PC-9 (cell line): ENCODE measurements at regions of chr4 and their contacts with region 1.

Region 1: GRCh38 chr4:145732895-145733880 is 53.2 kb downstream of the C4orf51 start:
- DNase-seq: peak; percentile 75 to 96
- H3K4me3 ChIP-seq: peak overlapping the region; percentile 65
- H3K27ac ChIP-seq: peak overlapping the region; percentile 100
- H3K4me1 ChIP-seq: peaks cover 41% of the 10 kb centered on the region
- H3K27me3 ChIP-seq: no peaks in the 10 kb centered on the region
- CTCF ChIP-seq: no peak

Region 2: DNA sequence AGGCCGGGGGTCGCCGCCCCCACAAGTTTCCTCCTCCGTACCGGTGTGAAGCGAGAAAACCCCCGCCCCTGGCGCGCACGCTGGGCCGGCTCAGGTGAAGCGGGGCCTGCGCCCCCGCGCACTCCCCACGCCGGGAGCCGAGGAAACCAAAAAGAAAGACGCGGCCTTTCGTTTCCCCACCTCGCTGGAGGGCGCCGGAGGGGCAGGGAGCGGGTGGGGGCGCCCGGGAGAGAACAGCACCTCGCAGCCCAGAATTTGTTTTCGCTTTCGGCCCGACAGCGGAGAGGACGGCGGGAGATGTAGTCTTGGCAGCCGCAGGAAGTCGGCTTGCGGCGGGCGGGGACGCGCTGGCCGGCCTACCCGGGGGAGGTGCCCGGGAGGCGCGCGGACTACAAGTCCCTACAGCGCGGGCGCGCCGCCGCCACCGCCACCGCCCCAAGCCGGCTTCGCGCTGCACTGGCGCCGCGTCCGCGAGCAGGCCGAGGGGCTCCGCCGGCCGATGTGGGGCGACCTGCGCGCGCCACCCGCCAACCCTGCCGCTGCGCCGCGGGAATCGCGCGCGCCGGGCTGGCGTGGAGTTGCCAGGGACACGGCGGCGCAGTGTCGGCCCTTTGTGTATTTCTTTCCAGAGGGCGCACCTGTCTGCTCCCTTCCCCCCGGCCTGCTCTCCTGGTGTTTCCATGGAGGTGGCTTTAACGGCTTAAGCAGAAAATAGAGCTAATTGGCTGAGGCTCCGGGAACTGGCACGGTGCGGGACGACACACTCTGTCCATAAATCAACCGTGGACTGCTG is 552.7 kb before region 1 on chr4 and contains the start of gene OTUD4:
- CTCF ChIA-PET with region 1: no interaction called
- POLR2A ChIA-PET with region 1: no interaction called
- intact Hi-C with region 1: loop called (anchors 2 kb)
- DNase-seq: peak; percentile 71 to 94
- H3K4me3 ChIP-seq: peak within 1 kb of the TSS; percentile 95
- H3K27ac ChIP-seq: peak within 1 kb of the TSS; percentile 79
- H3K4me1 ChIP-seq: peaks cover 14% of the 10 kb centered on the region
- H3K27me3 ChIP-seq: no peaks in the 10 kb centered on the region
- CTCF ChIP-seq: no peak
- total RNA-seq, gene OTUD4: 43.5 and 44.2 TPM in 2 replicates

Region 3: DNA sequence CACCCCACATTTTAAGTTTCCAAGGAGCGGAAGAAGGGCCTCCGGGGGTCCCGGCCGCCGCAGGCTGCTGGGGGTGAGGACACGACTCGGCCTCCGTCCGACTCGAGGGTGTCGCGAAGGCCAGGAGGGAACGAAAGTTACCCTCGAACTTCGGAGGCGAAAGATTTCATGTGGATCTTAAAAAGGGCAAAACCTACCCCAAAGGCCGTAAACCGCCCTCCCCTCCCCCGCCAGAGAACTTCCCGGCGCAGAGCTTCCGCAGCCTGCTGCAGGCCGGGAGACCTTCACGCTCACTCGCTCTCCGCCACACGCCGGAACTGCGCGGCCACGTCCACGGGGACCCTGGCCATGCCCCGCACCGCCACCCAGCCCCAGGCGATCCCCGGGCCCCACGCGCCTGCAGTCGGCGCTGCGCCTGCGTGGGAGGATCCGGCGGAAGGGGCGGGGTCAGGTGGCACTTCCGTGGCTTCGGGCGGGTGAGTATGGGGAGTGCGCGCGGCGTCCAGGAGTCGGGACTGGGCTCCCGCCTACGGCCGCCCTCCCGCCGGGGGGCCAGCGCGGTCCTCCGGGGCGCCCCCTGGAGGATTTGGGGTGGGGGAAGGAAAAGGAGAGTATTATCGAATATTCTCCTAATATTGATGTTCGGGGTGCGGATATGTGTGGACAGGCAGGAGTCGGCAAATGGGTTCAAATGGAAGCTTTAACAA is 114.1 kb before region 1 on chr4 and contains the start of gene MMAA:
- CTCF ChIA-PET with region 1: no interaction called
- POLR2A ChIA-PET with region 1: interaction called, 4 read pairs
- intact Hi-C with region 1: loop called (anchors 1 kb)
- DNase-seq: peak; percentile 66 to 94
- H3K4me3 ChIP-seq: peak within 1 kb of the TSS; percentile 94
- H3K27ac ChIP-seq: peak within 1 kb of the TSS; percentile 86
- H3K4me1 ChIP-seq: no peaks in the 10 kb centered on the region; the same call in 1 of the 2 replicates
- H3K27me3 ChIP-seq: no peaks in the 10 kb centered on the region
- CTCF ChIP-seq: peak; percentile 72
- total RNA-seq, gene MMAA: 5.4 and 6.3 TPM in 2 replicates

Region 4: GRCh38 chr4:145719752-145720624 is 13.2 kb before region 1 on chr4:
- CTCF ChIA-PET with region 1: no interaction called
- POLR2A ChIA-PET with region 1: interaction called, 10 read pairs
- intact Hi-C with region 1: no loop called
- DNase-seq: no peak
- H3K4me3 ChIP-seq: no peak overlapping the region
- H3K27ac ChIP-seq: no peak overlapping the region
- H3K4me1 ChIP-seq: peaks cover 12% of the 10 kb centered on the region
- H3K27me3 ChIP-seq: no peaks in the 10 kb centered on the region
- CTCF ChIP-seq: no peak

Region 5: GRCh38 chr4:145808021-145808650 is 74.9 kb after region 1 on chr4:
- CTCF ChIA-PET with region 1: interaction called, 5 read pairs
- POLR2A ChIA-PET with region 1: interaction called, 4 read pairs
- intact Hi-C with region 1: loop called (anchors 1 kb)
- DNase-seq: peak; percentile 77 to 96
- H3K4me3 ChIP-seq: peak overlapping the region; percentile 35; the same call in 1 of the 2 replicates
- H3K27ac ChIP-seq: peak overlapping the region; percentile 99
- H3K4me1 ChIP-seq: peaks cover 26% of the 10 kb centered on the region
- H3K27me3 ChIP-seq: no peaks in the 10 kb centered on the region
- CTCF ChIP-seq: no peak

Region 6: DNA sequence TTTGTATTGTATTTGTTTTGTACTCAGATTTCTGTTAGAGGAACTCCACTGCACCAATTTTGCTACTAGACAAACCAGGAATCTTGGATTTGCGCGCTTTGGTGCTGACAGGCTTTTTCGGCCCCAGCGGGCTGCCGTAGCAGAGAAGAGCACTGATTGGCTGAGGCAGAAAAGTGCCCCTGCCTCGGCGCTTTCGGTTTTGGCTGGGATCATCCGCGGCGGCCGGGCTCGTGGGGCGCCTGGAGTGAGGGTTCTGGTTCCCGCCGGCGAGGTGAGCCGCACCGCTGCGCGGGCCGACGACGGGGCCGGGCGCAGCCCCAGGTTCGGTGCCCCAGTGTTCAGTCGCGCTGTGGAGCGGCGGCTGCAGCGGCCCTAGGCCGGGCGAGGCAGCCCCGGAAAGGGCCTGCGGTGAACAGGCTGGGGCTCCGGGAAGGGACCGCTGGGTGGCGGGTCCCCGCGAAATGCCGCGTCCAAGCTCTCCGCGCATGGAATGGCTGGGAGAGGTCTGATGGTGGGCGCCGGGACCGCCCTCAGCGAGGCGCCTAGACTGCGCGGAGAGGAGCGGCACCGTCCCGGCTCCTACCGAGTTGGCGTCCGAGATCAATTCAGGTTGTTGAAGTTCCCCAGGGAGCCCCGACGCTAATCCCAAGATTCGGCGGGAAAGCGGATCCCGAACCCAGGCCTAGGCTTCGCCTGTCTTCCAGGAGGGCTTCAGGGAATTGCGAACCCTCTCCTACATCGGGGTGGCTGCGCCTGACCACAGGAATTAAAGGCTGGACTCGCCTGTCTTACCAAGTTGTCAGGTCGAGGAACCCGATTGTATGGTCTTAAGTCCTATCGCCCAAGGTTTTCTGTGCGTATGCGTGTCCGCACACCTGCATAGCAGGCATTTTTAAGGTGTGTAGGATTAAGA is 442.6 kb after region 1 on chr4 and contains the start of gene LSM6:
- CTCF ChIA-PET with region 1: no interaction called
- POLR2A ChIA-PET with region 1: interaction called, 3 read pairs
- intact Hi-C with region 1: loop called (anchors 5 kb)
- DNase-seq: peak; percentile 53 to 73
- H3K4me3 ChIP-seq: peak within 1 kb of the TSS; percentile 91
- H3K27ac ChIP-seq: peak within 1 kb of the TSS; percentile 57
- H3K4me1 ChIP-seq: peaks cover 12% of the 10 kb centered on the region
- H3K27me3 ChIP-seq: no peaks in the 10 kb centered on the region
- CTCF ChIP-seq: no peak
- total RNA-seq, gene LSM6: 43.3 and 45.6 TPM in 2 replicates

Region 7: DNA sequence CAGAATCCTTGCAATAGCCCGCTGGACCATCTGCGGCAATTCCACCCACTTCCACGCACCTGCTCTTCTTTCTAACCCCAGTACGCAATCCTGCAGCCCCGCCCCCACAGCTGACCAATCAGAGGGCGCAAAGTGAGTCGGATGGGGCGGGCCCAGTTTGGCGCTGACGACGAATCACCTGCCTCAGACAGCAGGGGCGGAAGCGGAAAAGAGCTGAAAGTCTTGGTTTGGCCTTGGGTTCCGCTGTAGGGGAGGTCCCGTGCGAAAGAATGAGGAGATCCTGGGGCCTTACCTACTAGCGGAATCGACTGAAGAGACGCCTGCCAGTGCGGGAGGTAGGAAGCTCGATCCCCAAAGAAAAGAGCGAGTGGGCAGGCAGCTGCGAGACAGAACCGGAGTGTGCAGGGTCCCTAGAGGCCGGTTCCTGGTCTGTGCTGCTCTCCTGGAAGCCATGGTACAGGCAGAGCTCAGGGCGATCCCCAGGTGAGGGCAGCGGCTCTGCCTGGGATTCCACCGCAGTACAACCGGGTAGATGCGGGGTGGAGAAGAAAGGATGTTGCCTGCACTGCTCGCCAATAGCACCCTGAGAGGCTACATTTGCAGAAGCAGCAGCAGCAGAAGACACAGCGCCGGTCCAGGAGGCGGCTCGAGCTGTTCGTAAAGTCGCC is 1884.1 kb after region 1 on chr4 and contains the start of gene TMEM184C:
- CTCF ChIA-PET with region 1: no interaction called
- POLR2A ChIA-PET with region 1: no interaction called
- intact Hi-C with region 1: loop called (anchors 5 kb)
- DNase-seq: peak; percentile 86 to 97
- H3K4me3 ChIP-seq: peak within 1 kb of the TSS; percentile 84
- H3K27ac ChIP-seq: peak within 1 kb of the TSS; percentile 44
- H3K4me1 ChIP-seq: no peaks in the 10 kb centered on the region; the same call in 1 of the 2 replicates
- H3K27me3 ChIP-seq: no peaks in the 10 kb centered on the region
- CTCF ChIP-seq: no peak
- total RNA-seq, gene TMEM184C: 29.1 and 40.4 TPM in 2 replicates